ENCODE measurements at regions of chr6 and their contacts with region 1.

Region 1: DNA sequence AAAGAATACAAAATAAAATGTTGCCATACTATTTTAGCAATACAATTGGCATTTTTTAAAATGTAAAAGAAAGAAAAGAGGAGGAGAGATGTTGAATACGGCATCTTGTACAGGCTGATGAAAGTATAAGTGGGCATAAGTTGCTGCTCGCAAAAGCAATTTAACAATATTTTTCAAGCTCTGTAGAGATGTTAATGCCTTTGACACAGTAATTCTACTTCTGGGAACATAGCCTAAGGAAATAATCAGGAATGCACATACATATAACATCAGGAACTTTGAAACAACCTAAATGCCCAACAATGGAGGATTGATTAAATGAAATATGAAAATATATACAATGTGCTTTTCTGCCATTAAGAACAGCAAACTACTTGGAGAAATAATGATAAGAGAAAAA is 80.2 kb downstream of the LRRC1 start:
- DNase-seq: no peak
- H3K4me3 ChIP-seq: no peak overlapping the region
- H3K27ac ChIP-seq: no peak overlapping the region
- H3K4me1 ChIP-seq: no peaks in the 10 kb centered on the region
- H3K27me3 ChIP-seq: no peaks in the 10 kb centered on the region
- CTCF ChIP-seq: no peak

Region 2: DNA sequence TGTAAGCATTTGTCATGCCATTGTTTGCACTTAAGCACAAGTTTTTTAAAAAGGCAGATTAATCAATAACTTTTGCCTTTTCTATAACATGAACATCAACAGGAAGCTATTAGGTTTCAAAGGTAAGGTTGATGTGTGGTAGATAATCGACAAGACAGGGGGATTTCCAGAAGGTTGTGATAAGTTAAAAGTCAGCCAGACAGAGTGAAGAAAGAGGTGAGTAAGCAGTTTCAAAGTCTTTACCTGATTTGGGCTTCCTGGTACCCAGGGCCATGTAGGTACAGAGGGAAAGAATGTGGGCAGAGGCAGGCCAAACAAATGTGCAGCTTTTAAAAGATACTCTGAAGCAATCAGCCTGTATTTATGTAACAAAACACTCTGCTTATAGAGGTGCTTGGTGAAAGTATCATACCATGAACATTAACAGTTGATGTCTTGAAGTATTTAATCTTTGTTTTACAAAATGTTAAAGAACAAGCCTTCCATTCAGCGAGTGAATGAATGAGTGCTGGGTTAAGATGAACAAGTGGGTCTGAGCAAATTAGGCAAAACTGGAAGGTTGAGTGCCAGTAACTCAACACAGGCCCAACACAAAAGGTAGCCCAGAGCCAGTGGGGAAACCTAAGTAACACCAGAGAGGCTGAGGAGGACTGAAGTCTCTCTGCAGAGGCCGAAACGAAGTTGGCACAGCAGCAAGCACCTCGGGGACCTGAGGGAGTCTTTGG is 20.0 kb before region 1 on chr6:
- CTCF ChIA-PET with region 1: no interaction called
- dilution Hi-C with region 1: no loop called
- in situ Hi-C with region 1: no loop called
- intact Hi-C with region 1: loop called (anchors 1 kb)
- DNase-seq: peak; percentile 80
- H3K4me3 ChIP-seq: no peak overlapping the region
- H3K27ac ChIP-seq: peak overlapping the region; percentile 25
- H3K4me1 ChIP-seq: peaks cover 28% of the 10 kb centered on the region
- H3K27me3 ChIP-seq: no peaks in the 10 kb centered on the region
- CTCF ChIP-seq: no peak

Measured in mammary epithelial cell (primary cell).